AG04449 (cell line): ENCODE measurements at regions of chr21 and their contacts with region 1.

Region 1: GRCh38 chr21:45140346-45140940 is 66.1 kb downstream of the ADARB1 start:
- DNase-seq: peak; percentile 78
- H3K4me3 ChIP-seq: no peak overlapping the region
- CTCF ChIP-seq: peak; percentile 98

Region 2: GRCh38 chr21:44892536-44893277 is 247.7 kb before region 1 on chr21:
- CTCF ChIA-PET with region 1: interaction called, 21 read pairs
- POLR2A ChIA-PET with region 1: no interaction called
- DNase-seq: no peak
- H3K4me3 ChIP-seq: no peak overlapping the region
- CTCF ChIP-seq: peak; percentile 84

Region 3: GRCh38 chr21:45078877-45079281 is 61.6 kb before region 1 on chr21:
- CTCF ChIA-PET with region 1: interaction called, 64 read pairs
- POLR2A ChIA-PET with region 1: no interaction called
- DNase-seq: no peak
- H3K4me3 ChIP-seq: no peak overlapping the region
- CTCF ChIP-seq: no peak

Region 4: DNA sequence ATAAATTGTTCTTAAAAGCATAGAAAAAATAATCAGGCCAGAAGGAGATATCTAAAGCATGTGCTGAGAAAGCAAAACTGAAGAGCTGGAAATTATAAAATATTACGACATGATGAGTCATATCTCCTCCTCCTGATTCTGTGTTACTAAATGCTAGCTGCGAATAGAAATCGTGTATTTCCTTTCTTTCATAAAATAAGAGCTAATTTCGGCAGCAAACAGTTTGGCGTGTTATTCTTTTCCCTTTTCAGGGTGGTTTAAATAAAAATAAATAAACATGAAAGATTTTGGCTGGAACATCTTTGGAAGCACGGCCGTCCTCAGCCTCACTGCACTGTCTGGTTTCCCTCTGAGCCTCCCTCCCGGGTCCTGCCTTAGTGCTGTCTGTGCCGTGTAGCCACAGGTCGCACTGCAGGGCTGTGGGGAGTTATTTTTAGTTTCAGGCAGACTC is 10.1 kb before region 1 on chr21:
- CTCF ChIA-PET with region 1: interaction called, 153 read pairs
- POLR2A ChIA-PET with region 1: no interaction called
- DNase-seq: no peak
- H3K4me3 ChIP-seq: peak overlapping the region; percentile 46
- CTCF ChIP-seq: no peak

Region 5: DNA sequence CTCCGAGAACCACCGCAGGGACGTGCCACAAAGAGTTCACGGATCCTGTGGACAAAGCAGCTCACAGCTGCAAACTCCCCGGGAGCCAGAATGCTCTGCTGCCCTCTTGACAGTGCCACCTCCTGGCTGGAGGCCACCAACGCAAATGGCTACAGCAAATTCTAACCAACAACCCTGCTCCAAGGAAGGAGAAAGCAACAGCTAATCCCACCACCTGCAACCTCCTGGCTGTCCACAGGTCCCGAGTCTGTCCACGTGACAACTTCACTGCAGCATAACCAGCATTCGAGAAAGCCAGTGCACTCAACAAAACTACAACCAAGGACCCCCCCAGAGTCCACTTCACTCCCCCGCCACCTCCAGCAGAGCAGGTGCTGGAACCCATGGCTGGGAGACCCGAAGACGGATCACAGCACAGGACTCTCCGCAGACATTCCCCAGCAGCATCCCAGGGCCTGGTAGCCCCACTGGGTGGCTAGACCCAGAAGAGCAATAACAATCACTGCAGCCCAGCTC is 129.9 kb after region 1 on chr21:
- CTCF ChIA-PET with region 1: interaction called, 38 read pairs
- POLR2A ChIA-PET with region 1: no interaction called
- DNase-seq: no peak
- H3K4me3 ChIP-seq: no peak overlapping the region
- CTCF ChIP-seq: peak; percentile 21

Region 6: GRCh38 chr21:45341779-45342178 is 201.3 kb after region 1 on chr21:
- CTCF ChIA-PET with region 1: no interaction called
- POLR2A ChIA-PET with region 1: no interaction called
- DNase-seq: no peak
- H3K4me3 ChIP-seq: no peak overlapping the region
- CTCF ChIP-seq: no peak

Region 7: GRCh38 chr21:45378258-45378966 is 238.0 kb after region 1 on chr21:
- CTCF ChIA-PET with region 1: no interaction called
- POLR2A ChIA-PET with region 1: no interaction called
- DNase-seq: no peak
- H3K4me3 ChIP-seq: no peak overlapping the region
- CTCF ChIP-seq: no peak

Region 8: DNA sequence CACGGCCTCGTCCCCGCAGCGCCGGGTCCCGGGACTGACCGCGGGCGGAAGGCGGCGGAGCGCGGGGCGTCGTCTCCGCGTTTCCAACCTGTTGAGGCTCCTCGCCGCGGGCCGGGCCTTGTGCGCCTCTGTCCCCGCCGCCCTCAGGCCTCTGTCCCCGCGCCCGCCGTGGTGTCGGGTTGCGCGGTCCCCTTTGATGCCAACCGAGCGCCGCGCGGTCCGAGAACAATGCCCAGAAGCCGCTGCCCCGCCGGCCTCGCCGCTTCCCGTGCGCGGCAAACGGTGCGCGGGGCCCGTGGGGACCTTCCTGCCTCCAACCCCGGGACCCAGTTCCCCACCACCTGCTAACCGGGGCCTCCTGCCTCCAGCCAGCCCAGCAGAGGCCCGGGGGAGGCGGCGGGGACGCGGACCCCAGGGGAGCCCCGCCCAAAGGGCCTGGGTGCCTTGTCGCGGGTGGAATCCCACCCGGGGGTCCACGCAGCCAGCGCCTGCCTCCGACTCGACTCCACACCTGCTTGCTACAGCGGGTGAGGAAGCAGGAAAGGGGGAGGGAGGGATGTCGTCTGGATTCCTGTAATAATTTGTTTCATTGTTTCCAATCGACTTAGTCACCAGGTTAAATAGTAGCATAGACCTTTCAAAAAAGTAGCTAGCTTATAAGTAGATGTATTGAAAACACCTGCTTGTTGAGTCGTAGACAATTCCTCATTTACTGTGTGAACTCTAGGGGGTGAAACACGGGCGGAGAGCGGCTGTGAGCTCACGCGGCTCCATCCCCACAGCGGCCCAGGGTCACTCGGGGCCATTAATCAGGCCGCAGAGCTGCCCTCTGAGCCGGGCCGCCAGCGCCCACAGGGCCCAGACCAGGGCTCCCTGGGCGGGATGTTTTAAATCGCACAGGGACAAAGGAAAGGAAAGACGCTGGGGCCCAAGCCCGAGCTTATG is 265.6 kb after region 1 on chr21:
- CTCF ChIA-PET with region 1: interaction called, 10 read pairs
- POLR2A ChIA-PET with region 1: no interaction called
- DNase-seq: no peak
- H3K4me3 ChIP-seq: peak overlapping the region; percentile 60
- CTCF ChIP-seq: no peak